Gastrocnemius medialis (tissue), 4 donors: ENCODE measurements at regions of chr16 and their contacts with region 1.

Region 1: GRCh38 chr16:58755989-58756649 is 22.0 kb upstream of the GOT2 start:
- DNase-seq: peak; percentile 48 to 62
- ATAC-seq: peak; percentile 89 to 94
- H3K4me3 ChIP-seq: no peak overlapping the region
- H3K27ac ChIP-seq: no peak overlapping the region
- H3K4me1 ChIP-seq: peaks cover 0 to 3% of the 10 kb centered on the region in 2 donors
- H3K27me3 ChIP-seq: no peaks in the 10 kb centered on the region
- CTCF ChIP-seq: peak; percentile 48 to 71 (median 64)
- POLR2A ChIP-seq: no peak

Region 2: GRCh38 chr16:58494981-58495520 is 261.1 kb before region 1 on chr16:
- in situ Hi-C with region 1: no loop called
- intact Hi-C with region 1: no loop called
- DNase-seq: peak in 1 of 2 donors; percentile 36
- ATAC-seq: peak; percentile 57 to 71
- H3K4me3 ChIP-seq: peak overlapping the region in 1 of 4 donors; percentile 21
- H3K27ac ChIP-seq: peak overlapping the region; percentile 10 to 54 (median 32)
- H3K4me1 ChIP-seq: no peaks in the 10 kb centered on the region
- H3K27me3 ChIP-seq: no peaks in the 10 kb centered on the region
- CTCF ChIP-seq: peak in 2 of 5 experiments; percentile 11 to 17
- POLR2A ChIP-seq: no peak

Region 3: DNA sequence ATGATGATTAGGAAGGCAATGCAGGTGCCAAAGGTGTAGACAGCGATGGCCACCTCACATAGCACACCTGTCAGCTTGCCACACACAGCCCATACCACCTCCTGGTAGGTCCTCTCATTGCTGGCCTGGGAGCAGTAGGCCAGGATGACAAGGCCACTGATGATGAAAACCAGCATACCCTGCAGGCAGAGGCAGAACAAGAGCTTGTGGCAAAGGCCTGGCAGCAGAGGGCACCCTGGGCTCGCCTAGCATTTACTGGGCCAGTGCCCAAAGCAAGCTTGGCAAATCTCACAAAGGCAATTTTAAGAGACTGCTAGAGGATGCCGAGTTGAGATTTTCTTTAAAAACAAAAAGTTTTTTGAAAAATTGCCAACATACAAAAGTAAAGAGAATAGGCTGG is 77.4 kb before region 1 on chr16:
- in situ Hi-C with region 1: loop called in 1 of 4 experiments (anchors 10 kb)
- intact Hi-C with region 1: loop called (anchors 1 kb)
- DNase-seq: peak in 1 of 2 donors; percentile 31
- ATAC-seq: peak in 1 of 2 donors; percentile 18
- H3K4me3 ChIP-seq: no peak overlapping the region
- H3K27ac ChIP-seq: no peak overlapping the region
- H3K4me1 ChIP-seq: peaks cover 10% of the 10 kb centered on the region in 2 donors
- H3K27me3 ChIP-seq: no peaks in the 10 kb centered on the region
- CTCF ChIP-seq: peak in 4 of 5 experiments; percentile 16 to 37 (median 29)
- POLR2A ChIP-seq: no peak